B cell (primary cell): ENCODE measurements at regions of chr7 and their contacts with region 1.

Region 1: DNA sequence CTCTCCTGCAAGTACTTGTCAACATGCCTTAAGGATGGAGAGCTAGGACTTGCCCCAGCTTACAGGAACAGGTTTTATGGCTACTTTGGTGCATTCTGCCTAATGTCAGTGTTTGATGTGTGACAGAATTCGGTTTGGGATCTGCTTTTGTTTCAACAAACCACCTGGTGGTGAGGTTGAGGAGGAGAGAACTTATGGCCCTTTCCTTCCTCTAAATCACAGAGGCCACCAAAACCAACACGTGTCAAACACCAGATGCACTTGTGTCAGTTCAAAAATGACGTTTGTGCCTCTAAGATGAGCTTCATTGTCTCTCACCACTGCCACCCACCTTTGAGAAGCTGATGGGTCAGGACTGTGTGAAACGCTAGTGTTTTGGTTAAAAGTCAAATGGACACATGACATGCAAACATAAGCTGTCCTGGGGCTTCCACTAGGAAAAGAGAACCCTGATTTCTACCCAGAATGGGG is 83.9 kb downstream of the OSBPL3 start:
- DNase-seq: peak; percentile 69
- ATAC-seq: peak; percentile 90
- H3K4me3 ChIP-seq: no peak overlapping the region
- H3K4me3 Mint-ChIP-seq: no peak overlapping the region
- H3K27ac ChIP-seq: peak overlapping the region in 1 of 2 donors; percentile 51
- H3K27ac Mint-ChIP-seq: peak overlapping the region; percentile 76
- H3K4me1 ChIP-seq: peaks cover 33 to 36% of the 10 kb centered on the region in 2 donors
- H3K4me1 Mint-ChIP-seq: peaks cover 55% of the 10 kb centered on the region
- H3K27me3 ChIP-seq: no peaks in the 10 kb centered on the region
- H3K27me3 Mint-ChIP-seq: no peaks in the 10 kb centered on the region
- CTCF ChIP-seq: peak; percentile 22

Region 2: GRCh38 chr7:24510759-24511158 is 385.3 kb before region 1 on chr7:
- CTCF ChIA-PET with region 1: no interaction called
- POLR2A ChIA-PET with region 1: no interaction called
- intact Hi-C with region 1: no loop called
- DNase-seq: no peak
- ATAC-seq: no peak
- H3K4me3 ChIP-seq: no peak overlapping the region
- H3K4me3 Mint-ChIP-seq: no peak overlapping the region
- H3K27ac ChIP-seq: no peak overlapping the region
- H3K27ac Mint-ChIP-seq: no peak overlapping the region
- H3K4me1 ChIP-seq: no peaks in the 10 kb centered on the region
- H3K4me1 Mint-ChIP-seq: no peaks in the 10 kb centered on the region
- H3K27me3 ChIP-seq: no peaks in the 10 kb centered on the region
- H3K27me3 Mint-ChIP-seq: peaks cover 25% of the 10 kb centered on the region
- CTCF ChIP-seq: no peak

Region 3: DNA sequence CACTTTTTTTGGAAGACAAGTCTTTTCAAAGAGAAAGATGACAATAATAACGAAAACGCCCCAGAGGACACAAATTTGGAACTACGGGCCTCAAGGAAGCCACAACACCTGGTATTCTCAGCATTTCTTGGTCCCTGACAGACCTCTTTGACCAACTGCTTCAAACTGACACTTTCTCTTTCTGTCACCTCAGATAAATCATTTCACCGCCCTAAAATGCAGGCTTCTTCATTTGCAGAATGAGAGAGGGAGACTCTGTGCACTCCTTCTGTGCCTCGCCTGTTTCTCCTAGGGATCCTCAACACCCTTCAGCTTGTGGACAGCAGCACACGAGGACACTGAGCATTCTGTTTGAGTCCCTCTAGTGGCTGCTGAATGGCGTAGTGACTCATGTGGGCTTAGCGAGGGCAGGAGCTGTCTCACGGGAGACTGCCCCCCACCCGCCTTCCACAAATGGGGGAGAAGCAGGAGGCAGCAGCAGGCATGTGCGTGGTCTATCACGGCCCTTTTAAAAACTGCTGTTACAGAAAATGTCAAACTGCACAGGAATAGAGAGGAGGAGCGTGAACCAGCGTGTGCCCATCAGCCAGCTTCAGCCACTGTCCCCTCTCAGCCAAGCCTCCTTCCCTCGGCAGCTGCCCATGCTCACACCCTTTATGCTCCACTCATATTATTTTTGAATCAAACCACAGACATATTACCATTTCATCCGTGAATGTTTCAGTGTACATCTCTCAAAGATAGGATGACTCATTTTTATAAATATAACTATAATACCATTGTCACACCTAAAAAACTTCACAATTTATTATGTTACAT is 180.2 kb before region 1 on chr7:
- CTCF ChIA-PET with region 1: no interaction called
- POLR2A ChIA-PET with region 1: no interaction called
- intact Hi-C with region 1: no loop called
- DNase-seq: peak; percentile 56
- ATAC-seq: no peak
- H3K4me3 ChIP-seq: peak overlapping the region in 1 of 5 experiments; percentile 9
- H3K4me3 Mint-ChIP-seq: peak overlapping the region; percentile 68
- H3K27ac ChIP-seq: no peak overlapping the region
- H3K27ac Mint-ChIP-seq: no peak overlapping the region
- H3K4me1 ChIP-seq: peaks cover 52 to 55% of the 10 kb centered on the region in 2 donors
- H3K4me1 Mint-ChIP-seq: peaks cover 61% of the 10 kb centered on the region
- H3K27me3 ChIP-seq: no peaks in the 10 kb centered on the region
- H3K27me3 Mint-ChIP-seq: no peaks in the 10 kb centered on the region
- CTCF ChIP-seq: peak; percentile 56

Region 4: GRCh38 chr7:24836084-24836483 is 60.0 kb before region 1 on chr7:
- CTCF ChIA-PET with region 1: interaction called, 7 read pairs
- POLR2A ChIA-PET with region 1: no interaction called
- intact Hi-C with region 1: loop called (anchors 2 kb)
- DNase-seq: peak; percentile 89
- ATAC-seq: peak; percentile 80
- H3K4me3 ChIP-seq: peak overlapping the region in 1 of 5 experiments; percentile 46
- H3K4me3 Mint-ChIP-seq: peak overlapping the region; percentile 80
- H3K27ac ChIP-seq: peak overlapping the region; percentile 97
- H3K27ac Mint-ChIP-seq: peak overlapping the region; percentile 98
- H3K4me1 ChIP-seq: peaks cover 72 to 74% of the 10 kb centered on the region in 2 donors
- H3K4me1 Mint-ChIP-seq: peaks cover 75% of the 10 kb centered on the region
- H3K27me3 ChIP-seq: no peaks in the 10 kb centered on the region
- H3K27me3 Mint-ChIP-seq: no peaks in the 10 kb centered on the region
- CTCF ChIP-seq: no peak

Region 5: DNA sequence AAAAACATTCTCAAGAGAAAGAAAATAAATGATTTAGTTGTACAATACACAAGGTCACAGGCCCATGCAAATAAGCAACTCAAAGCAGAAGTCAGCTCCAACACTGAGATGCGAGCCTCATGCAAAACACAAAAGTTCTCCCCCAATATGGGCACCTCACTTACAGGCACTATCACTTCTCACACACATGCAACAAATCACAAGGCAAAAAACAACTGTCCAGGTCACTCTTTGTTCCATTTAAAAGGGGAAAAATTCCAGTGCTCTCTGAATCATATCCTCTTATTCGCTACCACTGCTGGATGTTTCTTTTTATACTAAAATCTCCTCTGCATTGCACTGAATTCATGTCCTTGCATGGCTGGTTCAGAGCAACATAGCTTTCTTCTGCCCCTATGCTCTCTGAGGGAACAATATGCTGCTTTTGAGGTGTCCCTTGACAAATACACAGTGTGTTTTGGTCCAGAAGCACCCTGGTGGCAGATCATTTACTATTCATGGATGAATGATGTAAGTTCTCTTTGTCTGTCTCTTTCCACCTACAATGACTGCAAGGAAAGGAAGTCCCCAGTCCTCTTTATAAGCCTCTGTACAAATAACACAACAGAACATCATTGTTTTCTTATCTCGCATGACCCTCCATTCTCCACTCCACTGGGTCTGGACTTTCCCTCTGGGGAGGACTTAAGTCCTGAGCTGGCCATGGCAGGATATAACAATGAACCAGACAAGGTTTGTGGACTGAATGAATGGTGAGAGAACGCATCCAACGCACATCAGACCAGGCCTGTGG is 53.4 kb before region 1 on chr7:
- CTCF ChIA-PET with region 1: interaction called, 14 read pairs
- POLR2A ChIA-PET with region 1: interaction called, 9 read pairs
- intact Hi-C with region 1: loop called (anchors 2 kb)
- DNase-seq: peak; percentile 72
- ATAC-seq: peak; percentile 78
- H3K4me3 ChIP-seq: peak overlapping the region in 1 of 5 experiments; percentile 15
- H3K4me3 Mint-ChIP-seq: peak overlapping the region; percentile 59
- H3K27ac ChIP-seq: peak overlapping the region; percentile 68 to 90
- H3K27ac Mint-ChIP-seq: peak overlapping the region; percentile 85
- H3K4me1 ChIP-seq: peaks cover 55 to 58% of the 10 kb centered on the region in 2 donors
- H3K4me1 Mint-ChIP-seq: peaks cover 53% of the 10 kb centered on the region
- H3K27me3 ChIP-seq: no peaks in the 10 kb centered on the region
- H3K27me3 Mint-ChIP-seq: no peaks in the 10 kb centered on the region
- CTCF ChIP-seq: no peak

Region 6: DNA sequence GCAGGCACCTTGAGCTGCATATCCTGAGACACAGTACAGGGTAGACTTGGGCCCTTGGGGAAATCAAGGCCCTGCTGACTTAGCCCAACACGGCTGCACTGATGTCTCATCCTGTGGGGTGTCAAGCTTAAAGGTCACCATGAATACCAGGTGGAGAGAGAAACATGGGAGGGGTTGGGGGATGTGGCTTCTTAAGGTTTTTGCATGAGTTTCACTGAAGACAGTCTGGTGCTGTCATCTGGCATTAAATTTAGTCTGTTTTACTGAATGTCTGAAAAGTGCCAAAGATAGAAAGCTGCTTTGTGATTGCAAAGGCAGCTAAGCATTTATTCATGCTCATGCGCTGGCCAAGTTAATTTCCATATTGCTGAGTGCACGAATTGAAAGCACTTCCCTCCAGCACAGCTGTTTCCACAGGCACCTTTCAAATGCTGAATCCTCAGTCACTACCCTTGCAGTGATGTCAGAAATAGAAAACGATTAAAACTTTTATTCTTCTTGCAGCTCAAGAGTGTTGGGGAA is 18.2 kb before region 1 on chr7:
- CTCF ChIA-PET with region 1: interaction called, 17 read pairs
- POLR2A ChIA-PET with region 1: no interaction called
- intact Hi-C with region 1: no loop called
- DNase-seq: peak; percentile 59
- ATAC-seq: peak; percentile 90
- H3K4me3 ChIP-seq: no peak overlapping the region
- H3K4me3 Mint-ChIP-seq: peak overlapping the region; percentile 43
- H3K27ac ChIP-seq: peak overlapping the region in 1 of 2 donors; percentile 43
- H3K27ac Mint-ChIP-seq: peak overlapping the region; percentile 54
- H3K4me1 ChIP-seq: peaks cover 19 to 20% of the 10 kb centered on the region in 2 donors
- H3K4me1 Mint-ChIP-seq: peaks cover 29% of the 10 kb centered on the region
- H3K27me3 ChIP-seq: no peaks in the 10 kb centered on the region
- H3K27me3 Mint-ChIP-seq: no peaks in the 10 kb centered on the region
- CTCF ChIP-seq: no peak

Region 7: GRCh38 chr7:24882989-24883621 is 13.0 kb before region 1 on chr7:
- CTCF ChIA-PET with region 1: interaction called, 17 read pairs
- POLR2A ChIA-PET with region 1: no interaction called
- intact Hi-C with region 1: no loop called
- DNase-seq: no peak
- ATAC-seq: peak; percentile 32
- H3K4me3 ChIP-seq: no peak overlapping the region
- H3K4me3 Mint-ChIP-seq: peak overlapping the region; percentile 0
- H3K27ac ChIP-seq: no peak overlapping the region
- H3K27ac Mint-ChIP-seq: no peak overlapping the region
- H3K4me1 ChIP-seq: peaks cover 17 to 18% of the 10 kb centered on the region in 2 donors
- H3K4me1 Mint-ChIP-seq: peaks cover 32% of the 10 kb centered on the region
- H3K27me3 ChIP-seq: no peaks in the 10 kb centered on the region
- H3K27me3 Mint-ChIP-seq: no peaks in the 10 kb centered on the region
- CTCF ChIP-seq: no peak

Region 8: DNA sequence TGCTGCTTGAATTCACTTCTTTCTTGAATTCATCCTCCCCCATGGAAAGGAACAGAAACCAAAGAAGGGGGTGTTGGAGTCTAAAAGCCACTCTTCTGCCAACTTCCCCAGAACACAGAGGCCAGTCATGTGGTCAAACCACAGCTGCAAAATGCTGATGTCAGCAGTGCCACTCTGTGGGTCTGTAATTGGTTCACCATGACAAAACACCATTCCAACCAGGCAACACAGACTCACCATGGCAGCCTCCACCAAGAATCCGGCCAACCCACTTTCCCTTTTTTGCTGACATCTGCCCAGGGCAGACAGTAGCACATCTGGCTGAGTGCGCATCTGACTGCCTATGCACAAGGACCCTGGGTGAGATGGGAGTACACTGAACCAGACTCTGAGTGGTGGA is 67.2 kb after region 1 on chr7:
- CTCF ChIA-PET with region 1: no interaction called
- POLR2A ChIA-PET with region 1: no interaction called
- intact Hi-C with region 1: loop called (anchors 5 kb)
- DNase-seq: peak; percentile 88
- ATAC-seq: peak; percentile 88
- H3K4me3 ChIP-seq: no peak overlapping the region
- H3K4me3 Mint-ChIP-seq: peak overlapping the region; percentile 64
- H3K27ac ChIP-seq: peak overlapping the region; percentile 3 to 54
- H3K27ac Mint-ChIP-seq: peak overlapping the region; percentile 89
- H3K4me1 ChIP-seq: peaks cover 42 to 47% of the 10 kb centered on the region in 2 donors
- H3K4me1 Mint-ChIP-seq: peaks cover 80% of the 10 kb centered on the region
- H3K27me3 ChIP-seq: no peaks in the 10 kb centered on the region
- H3K27me3 Mint-ChIP-seq: no peaks in the 10 kb centered on the region
- CTCF ChIP-seq: no peak

Region 9: GRCh38 chr7:25148772-25149575 is 252.9 kb after region 1 on chr7:
- CTCF ChIA-PET with region 1: no interaction called
- POLR2A ChIA-PET with region 1: no interaction called
- intact Hi-C with region 1: no loop called
- DNase-seq: no peak
- ATAC-seq: no peak
- H3K4me3 ChIP-seq: no peak overlapping the region
- H3K4me3 Mint-ChIP-seq: no peak overlapping the region
- H3K27ac ChIP-seq: no peak overlapping the region
- H3K27ac Mint-ChIP-seq: no peak overlapping the region
- H3K4me1 ChIP-seq: no peaks in the 10 kb centered on the region
- H3K4me1 Mint-ChIP-seq: no peaks in the 10 kb centered on the region
- H3K27me3 ChIP-seq: no peaks in the 10 kb centered on the region
- H3K27me3 Mint-ChIP-seq: no peaks in the 10 kb centered on the region
- CTCF ChIP-seq: no peak